CD4-positive, alpha-beta T cell (primary cell): ENCODE measurements at regions of chr3 and their contacts with region 1.

Region 1: GRCh38 chr3:89098964-89099585 is 8.3 kb upstream of the EPHA3 start:
- DNase-seq: peak in 9 of 14 experiments; percentile 5 to 42 (median 11)
- ATAC-seq: peak; percentile 78
- H3K4me3 ChIP-seq: no peak overlapping the region
- H3K4me3 Mint-ChIP-seq: no peak overlapping the region
- H3K27ac ChIP-seq: no peak overlapping the region
- H3K27ac Mint-ChIP-seq: no peak overlapping the region
- H3K4me1 ChIP-seq: no peaks in the 10 kb centered on the region
- H3K4me1 Mint-ChIP-seq: no peaks in the 10 kb centered on the region
- H3K27me3 ChIP-seq: no peaks in the 10 kb centered on the region
- H3K27me3 Mint-ChIP-seq: no peaks in the 10 kb centered on the region
- CTCF ChIP-seq: peak; percentile 78

Region 2: GRCh38 chr3:88203642-88204055 is 895.4 kb before region 1 on chr3:
- CTCF ChIA-PET with region 1: no interaction called
- POLR2A ChIA-PET with region 1: no interaction called
- intact Hi-C with region 1: loop called (anchors 1 to 2 kb)
- DNase-seq: peak; percentile 8 to 53 (median 34)
- ATAC-seq: peak; percentile 65
- H3K4me3 ChIP-seq: no peak overlapping the region
- H3K4me3 Mint-ChIP-seq: no peak overlapping the region
- H3K27ac ChIP-seq: no peak overlapping the region
- H3K27ac Mint-ChIP-seq: no peak overlapping the region
- H3K4me1 ChIP-seq: no peaks in the 10 kb centered on the region
- H3K4me1 Mint-ChIP-seq: no peaks in the 10 kb centered on the region
- H3K27me3 ChIP-seq: no peaks in the 10 kb centered on the region
- H3K27me3 Mint-ChIP-seq: no peaks in the 10 kb centered on the region
- CTCF ChIP-seq: peak; percentile 75

Region 3: DNA sequence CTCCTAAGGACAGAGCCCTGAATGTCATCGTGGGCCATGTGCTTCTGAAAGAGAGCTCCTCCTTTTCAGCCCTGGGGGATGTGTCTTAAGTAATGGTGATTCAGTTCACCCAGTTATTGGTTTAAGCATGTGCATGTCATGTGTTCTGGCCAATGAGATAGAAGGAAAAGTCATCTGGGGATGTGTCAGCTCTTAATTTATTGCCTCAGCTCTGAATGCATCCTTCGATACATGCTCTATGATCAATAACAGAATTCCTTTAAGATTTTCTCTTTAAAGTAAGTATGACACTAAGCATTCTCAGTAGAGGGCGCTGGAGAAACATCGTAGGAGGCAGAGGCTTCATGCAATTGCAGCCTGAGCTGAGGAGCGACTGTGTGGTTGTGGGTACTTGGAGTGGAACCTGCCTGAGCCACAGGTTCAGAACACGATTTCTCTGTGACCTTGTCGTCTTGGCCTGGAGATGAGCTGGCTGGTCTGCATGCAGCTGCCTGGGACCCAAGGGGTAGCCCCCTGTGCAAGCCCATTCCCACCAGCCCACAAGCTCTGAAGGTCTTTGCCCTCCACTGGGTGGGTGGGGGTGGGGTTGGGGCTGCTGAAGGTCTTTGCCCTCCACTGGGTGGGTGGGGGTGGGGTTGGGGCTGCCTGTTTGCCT is 879.8 kb before region 1 on chr3:
- CTCF ChIA-PET with region 1: no interaction called
- POLR2A ChIA-PET with region 1: no interaction called
- intact Hi-C with region 1: loop called (anchors 5 kb)
- DNase-seq: peak in 4 of 14 experiments; percentile 4 to 27 (median 19)
- ATAC-seq: no peak
- H3K4me3 ChIP-seq: no peak overlapping the region
- H3K4me3 Mint-ChIP-seq: no peak overlapping the region
- H3K27ac ChIP-seq: no peak overlapping the region
- H3K27ac Mint-ChIP-seq: no peak overlapping the region
- H3K4me1 ChIP-seq: no peaks in the 10 kb centered on the region
- H3K4me1 Mint-ChIP-seq: no peaks in the 10 kb centered on the region
- H3K27me3 ChIP-seq: no peaks in the 10 kb centered on the region
- H3K27me3 Mint-ChIP-seq: peaks cover 7% of the 10 kb centered on the region
- CTCF ChIP-seq: no peak

Region 4: DNA sequence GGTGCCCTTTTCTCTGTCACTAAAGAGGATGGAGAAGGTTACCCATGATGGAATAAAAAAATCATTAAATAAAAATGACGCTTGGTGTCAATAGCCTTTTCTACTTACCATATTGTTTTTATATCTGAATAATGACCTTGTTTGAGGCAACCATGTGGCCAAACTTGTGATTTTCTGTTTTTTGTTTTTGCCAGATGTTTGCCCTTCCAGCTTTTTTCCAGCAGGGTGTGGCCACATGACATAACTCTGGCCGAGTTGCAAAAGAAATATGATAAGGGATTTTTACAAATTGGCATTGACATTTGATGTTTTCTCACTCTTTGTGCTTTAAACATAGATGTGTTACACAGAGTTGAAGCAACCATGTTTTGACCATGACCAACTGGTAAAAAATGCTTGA is 31.3 kb before region 1 on chr3:
- CTCF ChIA-PET with region 1: no interaction called
- POLR2A ChIA-PET with region 1: no interaction called
- intact Hi-C with region 1: no loop called
- DNase-seq: no peak
- ATAC-seq: no peak
- H3K4me3 ChIP-seq: no peak overlapping the region
- H3K4me3 Mint-ChIP-seq: no peak overlapping the region
- H3K27ac ChIP-seq: no peak overlapping the region
- H3K27ac Mint-ChIP-seq: no peak overlapping the region
- H3K4me1 ChIP-seq: no peaks in the 10 kb centered on the region
- H3K4me1 Mint-ChIP-seq: no peaks in the 10 kb centered on the region
- H3K27me3 ChIP-seq: no peaks in the 10 kb centered on the region
- H3K27me3 Mint-ChIP-seq: no peaks in the 10 kb centered on the region
- CTCF ChIP-seq: no peak

Region 5: DNA sequence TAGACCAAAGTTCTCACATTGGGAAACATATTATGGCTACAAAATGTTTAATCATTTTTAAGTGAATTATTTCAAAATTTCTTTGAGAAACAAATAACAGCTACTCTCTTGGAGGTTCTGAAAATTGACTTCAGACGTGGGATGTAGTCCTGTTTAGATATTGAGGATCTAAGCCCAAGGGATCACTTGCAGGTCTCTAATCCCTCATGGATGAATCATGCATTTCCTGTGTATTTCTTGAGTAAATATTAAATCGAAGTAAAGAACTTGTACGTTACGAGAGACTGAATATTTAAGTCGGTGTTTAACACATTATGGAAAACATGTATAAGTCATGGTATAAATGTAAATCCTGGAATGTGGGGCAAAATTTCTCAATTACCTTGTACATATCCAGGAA is 128.1 kb after region 1 on chr3:
- CTCF ChIA-PET with region 1: no interaction called
- POLR2A ChIA-PET with region 1: no interaction called
- intact Hi-C with region 1: no loop called
- DNase-seq: no peak
- ATAC-seq: no peak
- H3K4me3 ChIP-seq: no peak overlapping the region
- H3K4me3 Mint-ChIP-seq: no peak overlapping the region
- H3K27ac ChIP-seq: no peak overlapping the region
- H3K27ac Mint-ChIP-seq: no peak overlapping the region
- H3K4me1 ChIP-seq: no peaks in the 10 kb centered on the region
- H3K4me1 Mint-ChIP-seq: no peaks in the 10 kb centered on the region
- H3K27me3 ChIP-seq: no peaks in the 10 kb centered on the region
- H3K27me3 Mint-ChIP-seq: no peaks in the 10 kb centered on the region
- CTCF ChIP-seq: no peak